Transverse colon (tissue), 4 donors: ENCODE measurements at regions of chr4 and their contacts with region 1.

Region 1: GRCh38 chr4:138870737-138871554 is 144.6 kb upstream of the NOCT start:
- DNase-seq: peak; percentile 62
- H3K4me3 ChIP-seq: no peak overlapping the region
- H3K27ac ChIP-seq: no peak overlapping the region
- H3K4me1 ChIP-seq: peaks cover 0 to 6% (median 0%) of the 10 kb centered on the region in 4 donors
- H3K27me3 ChIP-seq: no peaks in the 10 kb centered on the region
- CTCF ChIP-seq: peak; percentile 80 to 85 (median 83)
- EP300 ChIP-seq: no peak
- POLR2A ChIP-seq: no peak

Region 2: GRCh38 chr4:138680989-138681604 is 189.8 kb before region 1 on chr4:
- in situ Hi-C with region 1: loop called in 1 of 4 experiments (anchors 10 kb)
- intact Hi-C with region 1: no loop called
- DNase-seq: peak; percentile 77
- H3K4me3 ChIP-seq: no peak overlapping the region
- H3K27ac ChIP-seq: no peak overlapping the region
- H3K4me1 ChIP-seq: no peaks in the 10 kb centered on the region
- H3K27me3 ChIP-seq: no peaks in the 10 kb centered on the region
- CTCF ChIP-seq: peak; percentile 85 to 94 (median 90)
- EP300 ChIP-seq: no peak
- POLR2A ChIP-seq: no peak

Region 3: GRCh38 chr4:139324620-139325019 is 453.7 kb after region 1 on chr4:
- in situ Hi-C with region 1: no loop called
- intact Hi-C with region 1: no loop called
- DNase-seq: no peak
- H3K4me3 ChIP-seq: no peak overlapping the region
- H3K27ac ChIP-seq: no peak overlapping the region
- H3K4me1 ChIP-seq: peaks cover 9 to 26% (median 19%) of the 10 kb centered on the region in 4 donors
- H3K27me3 ChIP-seq: no peaks in the 10 kb centered on the region
- CTCF ChIP-seq: no peak
- EP300 ChIP-seq: no peak
- POLR2A ChIP-seq: no peak

Region 4: GRCh38 chr4:139740531-139741041 is 869.6 kb after region 1 on chr4:
- in situ Hi-C with region 1: no loop called
- intact Hi-C with region 1: no loop called
- DNase-seq: peak; percentile 39
- H3K4me3 ChIP-seq: no peak overlapping the region
- H3K27ac ChIP-seq: peak overlapping the region; percentile 33 to 77 (median 68)
- H3K4me1 ChIP-seq: peaks cover 6 to 9% (median 6%) of the 10 kb centered on the region in 4 donors
- H3K27me3 ChIP-seq: no peaks in the 10 kb centered on the region
- CTCF ChIP-seq: no peak
- EP300 ChIP-seq: no peak
- POLR2A ChIP-seq: no peak